ENCODE measurements at regions of chrX and their contacts with region 1.

Region 1: DNA sequence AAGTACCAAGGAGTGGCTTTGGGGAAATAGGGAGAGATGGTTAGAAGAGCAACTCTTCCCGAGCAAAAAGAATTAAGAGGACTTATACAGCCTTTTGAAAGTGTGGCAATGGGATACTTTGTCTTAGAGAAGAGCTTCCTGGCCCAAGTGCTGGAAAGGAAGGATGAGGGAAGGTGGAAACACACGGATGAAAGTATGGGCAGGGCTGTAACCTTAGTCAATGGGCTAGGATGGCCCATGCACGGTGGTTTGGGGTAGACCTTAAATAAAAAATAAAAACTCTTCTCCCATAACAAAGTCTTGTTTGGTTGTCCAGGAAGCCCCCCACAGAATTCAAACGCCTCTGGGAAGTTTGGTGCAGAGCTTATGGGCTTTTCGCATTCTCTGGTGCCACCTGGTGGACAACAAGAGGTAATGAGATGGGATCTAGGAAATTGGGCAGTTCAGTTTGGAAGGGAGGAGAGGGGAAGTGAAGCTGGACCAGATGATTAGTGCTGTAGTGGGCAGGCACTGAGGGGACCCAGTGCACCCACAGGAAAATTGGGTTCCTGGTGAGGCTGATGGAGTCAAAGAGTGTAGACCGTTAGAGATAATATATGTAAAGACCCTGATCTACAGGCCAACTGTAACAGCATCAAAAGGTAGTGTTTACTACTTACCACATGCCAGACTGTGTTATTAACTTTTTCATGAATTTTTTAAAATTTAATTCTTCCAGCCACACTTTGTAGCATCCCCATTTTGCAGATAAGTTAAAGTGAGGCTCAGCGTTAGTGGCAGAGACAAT is 13.8 kb upstream of the ENOX2 start:
- DNase-seq: peak; percentile 47
- ATAC-seq: peak; percentile 76
- H3K4me3 ChIP-seq: no peak overlapping the region
- H3K27ac ChIP-seq: no peak overlapping the region
- H3K4me1 ChIP-seq: no peaks in the 10 kb centered on the region
- H3K27me3 ChIP-seq: no peaks in the 10 kb centered on the region
- CTCF ChIP-seq: peak; percentile 58 to 70 (median 63); a peak in 5 of 6 replicates
- POLR2A ChIP-seq: no peak
- RAD21 ChIP-seq: peak; percentile 86

Region 2: GRCh38 chrX:130330706-130331105 is 586.1 kb before region 1 on chrX:
- CTCF ChIA-PET with region 1: interaction called, 4 read pairs
- POLR2A ChIA-PET with region 1: no interaction called
- RAD21 ChIA-PET with region 1: no interaction called
- intact Hi-C with region 1: loop called (anchors 1 kb)
- DNase-seq: peak; percentile 64
- ATAC-seq: peak; percentile 97
- H3K4me3 ChIP-seq: no peak overlapping the region
- H3K27ac ChIP-seq: no peak overlapping the region
- H3K4me1 ChIP-seq: peaks cover 0 to 3% of the 10 kb centered on the region in 2 experiments; a peak in 1 of 4 replicates
- H3K27me3 ChIP-seq: no peaks in the 10 kb centered on the region
- CTCF ChIP-seq: peak; percentile 44 to 67 (median 48); a peak in 4 of 6 replicates
- POLR2A ChIP-seq: no peak
- RAD21 ChIP-seq: peak; percentile 79

Region 3: DNA sequence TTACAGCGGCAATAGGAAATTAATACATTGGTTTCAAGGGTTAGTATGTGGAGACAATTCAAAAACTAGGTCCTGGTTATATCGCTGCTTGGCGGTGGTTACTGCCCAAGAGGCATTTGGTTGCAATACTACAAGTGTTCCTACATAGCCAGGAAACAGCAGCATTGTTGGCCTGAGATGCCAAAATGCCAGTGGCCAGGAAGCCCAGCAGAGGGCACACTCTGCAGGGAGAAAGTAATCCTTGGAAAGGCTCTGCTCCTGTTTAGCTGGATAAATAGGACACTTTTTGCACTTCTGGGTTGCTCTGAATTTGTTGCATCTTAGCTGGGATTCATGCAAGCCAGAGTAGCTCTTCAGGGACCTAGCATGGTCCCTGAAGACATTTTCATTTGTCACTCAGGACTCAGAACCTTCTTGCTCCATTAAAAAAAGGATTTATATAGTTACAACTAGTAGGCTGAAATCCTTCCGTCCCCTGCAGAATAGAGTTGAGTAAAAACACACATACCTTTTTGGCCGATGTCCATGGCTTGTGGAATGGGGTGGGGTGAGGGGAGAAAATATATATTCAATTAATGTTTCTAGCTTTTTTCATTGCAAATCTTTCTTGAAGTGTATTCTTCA is 523.3 kb before region 1 on chrX:
- CTCF ChIA-PET with region 1: interaction called, 27 read pairs
- POLR2A ChIA-PET with region 1: no interaction called
- RAD21 ChIA-PET with region 1: interaction called in 1 of 2 experiments, 3 read pairs
- intact Hi-C with region 1: loop called (anchors 1 kb)
- DNase-seq: peak; percentile 18
- ATAC-seq: peak; percentile 91
- H3K4me3 ChIP-seq: no peak overlapping the region
- H3K27ac ChIP-seq: no peak overlapping the region
- H3K4me1 ChIP-seq: no peaks in the 10 kb centered on the region
- H3K27me3 ChIP-seq: no peaks in the 10 kb centered on the region
- CTCF ChIP-seq: peak; percentile 47 to 76 (median 62); a peak in 5 of 6 replicates
- POLR2A ChIP-seq: no peak
- RAD21 ChIP-seq: peak; percentile 65

Region 4: DNA sequence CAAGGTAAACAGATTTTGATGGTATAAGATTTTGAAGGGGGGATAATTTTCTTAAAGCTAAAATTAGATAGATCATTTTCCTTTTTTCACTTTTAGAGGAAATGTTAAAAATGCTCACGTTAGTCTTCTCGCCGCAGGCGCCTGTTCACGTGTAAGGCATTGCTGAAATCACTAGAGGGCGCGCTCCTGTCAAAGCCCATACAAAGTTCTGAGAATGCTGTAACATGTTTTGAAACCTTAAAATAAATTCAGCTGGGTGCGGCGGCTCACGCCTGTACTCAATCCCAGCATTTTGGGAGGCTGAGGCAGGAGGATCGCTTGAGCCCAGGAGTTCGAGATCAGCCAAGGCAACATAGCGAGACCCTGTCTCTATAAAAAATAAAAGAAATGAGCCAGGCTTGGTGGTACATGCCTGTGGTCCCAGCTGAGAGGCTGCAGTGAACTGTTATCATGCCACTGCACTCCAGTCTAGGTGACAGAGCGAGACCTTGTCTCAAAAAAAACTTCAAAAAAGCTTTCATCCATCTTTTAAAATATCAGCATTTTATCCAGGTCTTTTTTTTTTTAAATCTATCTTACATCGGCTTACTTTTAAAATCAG is 377.0 kb before region 1 on chrX:
- CTCF ChIA-PET with region 1: interaction called, 6 read pairs
- POLR2A ChIA-PET with region 1: no interaction called
- RAD21 ChIA-PET with region 1: interaction called in 1 of 2 experiments, 3 read pairs
- intact Hi-C with region 1: loop called (anchors 1 kb)
- DNase-seq: peak; percentile 27
- ATAC-seq: peak; percentile 80
- H3K4me3 ChIP-seq: no peak overlapping the region
- H3K27ac ChIP-seq: no peak overlapping the region
- H3K4me1 ChIP-seq: no peaks in the 10 kb centered on the region
- H3K27me3 ChIP-seq: no peaks in the 10 kb centered on the region
- CTCF ChIP-seq: peak; percentile 32 to 63 (median 61); a peak in 5 of 6 replicates
- POLR2A ChIP-seq: no peak
- RAD21 ChIP-seq: peak; percentile 52

Region 5: GRCh38 chrX:130575831-130576389 is 340.9 kb before region 1 on chrX:
- CTCF ChIA-PET with region 1: interaction called, 38 read pairs
- POLR2A ChIA-PET with region 1: no interaction called
- RAD21 ChIA-PET with region 1: interaction called, 3 to 6 read pairs
- intact Hi-C with region 1: loop called (anchors 2 kb)
- DNase-seq: peak; percentile 6
- ATAC-seq: peak; percentile 65
- H3K4me3 ChIP-seq: no peak overlapping the region
- H3K27ac ChIP-seq: no peak overlapping the region
- H3K4me1 ChIP-seq: no peaks in the 10 kb centered on the region
- H3K27me3 ChIP-seq: no peaks in the 10 kb centered on the region
- CTCF ChIP-seq: peak; percentile 35 to 77 (median 71); a peak in 5 of 6 replicates
- POLR2A ChIP-seq: no peak
- RAD21 ChIP-seq: peak; percentile 56